ENCODE measurements at regions of chr11 and their contacts with region 1.

Region 1: DNA sequence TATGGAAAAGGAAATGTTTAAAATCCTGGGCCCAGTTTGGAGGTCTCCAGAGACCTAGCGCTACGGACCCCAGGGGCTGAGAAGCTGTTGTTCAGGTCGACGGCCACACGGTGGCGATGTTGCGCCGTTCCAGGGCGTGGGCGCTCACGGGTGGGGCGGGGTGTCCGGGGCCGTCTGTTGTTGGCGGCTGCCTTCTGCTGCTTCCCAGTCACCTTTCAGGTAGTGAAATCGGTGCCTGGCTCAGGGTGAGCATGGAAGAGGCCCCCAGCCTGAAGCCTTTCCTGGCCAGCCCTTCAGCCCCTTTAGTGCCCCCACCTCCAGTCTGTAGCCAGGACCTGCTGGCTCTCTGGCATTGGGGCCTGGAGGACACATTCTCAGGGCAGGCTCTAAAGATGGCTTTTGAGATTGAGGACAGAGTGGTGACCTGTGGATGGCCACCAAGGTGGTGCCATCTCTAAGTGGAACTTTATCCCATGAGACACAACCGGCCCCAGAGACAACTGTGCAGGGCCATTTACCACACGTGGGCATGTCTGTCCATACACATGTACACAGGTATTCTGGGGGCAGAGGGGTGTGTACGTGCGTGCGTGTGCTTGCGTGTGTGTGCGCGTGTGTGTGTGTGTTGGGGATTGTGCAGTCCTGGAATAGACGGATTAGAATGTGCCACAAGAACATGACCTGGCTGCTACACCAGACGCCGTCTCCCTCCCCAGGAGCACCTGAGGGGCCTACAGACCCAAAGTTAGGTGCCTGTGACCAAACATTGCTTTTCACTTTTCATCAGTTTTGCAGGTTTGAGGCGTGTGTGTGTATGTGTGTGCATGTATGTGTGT is 53.8 kb downstream of the ST14 start:
- DNase-seq: peak; percentile 36 to 80 (median 52)
- H3K4me3 ChIP-seq: no peak overlapping the region
- H3K27ac ChIP-seq: no peak overlapping the region
- H3K4me1 ChIP-seq: no peaks in the 10 kb centered on the region
- H3K27me3 ChIP-seq: no peaks in the 10 kb centered on the region
- CTCF ChIP-seq: peak; percentile 63 to 83 (median 64)
- EP300 ChIP-seq: no peak
- POLR2A ChIP-seq: no peak

Region 2: GRCh38 chr11:130413405-130414106 is 200.2 kb after region 1 on chr11:
- intact Hi-C with region 1: loop called in 1 of 4 experiments (anchors 10 kb)
- DNase-seq: no peak
- H3K4me3 ChIP-seq: no peak overlapping the region
- H3K27ac ChIP-seq: no peak overlapping the region
- H3K4me1 ChIP-seq: no peaks in the 10 kb centered on the region
- H3K27me3 ChIP-seq: no peaks in the 10 kb centered on the region
- CTCF ChIP-seq: no peak
- EP300 ChIP-seq: no peak
- POLR2A ChIP-seq: no peak

Region 3: DNA sequence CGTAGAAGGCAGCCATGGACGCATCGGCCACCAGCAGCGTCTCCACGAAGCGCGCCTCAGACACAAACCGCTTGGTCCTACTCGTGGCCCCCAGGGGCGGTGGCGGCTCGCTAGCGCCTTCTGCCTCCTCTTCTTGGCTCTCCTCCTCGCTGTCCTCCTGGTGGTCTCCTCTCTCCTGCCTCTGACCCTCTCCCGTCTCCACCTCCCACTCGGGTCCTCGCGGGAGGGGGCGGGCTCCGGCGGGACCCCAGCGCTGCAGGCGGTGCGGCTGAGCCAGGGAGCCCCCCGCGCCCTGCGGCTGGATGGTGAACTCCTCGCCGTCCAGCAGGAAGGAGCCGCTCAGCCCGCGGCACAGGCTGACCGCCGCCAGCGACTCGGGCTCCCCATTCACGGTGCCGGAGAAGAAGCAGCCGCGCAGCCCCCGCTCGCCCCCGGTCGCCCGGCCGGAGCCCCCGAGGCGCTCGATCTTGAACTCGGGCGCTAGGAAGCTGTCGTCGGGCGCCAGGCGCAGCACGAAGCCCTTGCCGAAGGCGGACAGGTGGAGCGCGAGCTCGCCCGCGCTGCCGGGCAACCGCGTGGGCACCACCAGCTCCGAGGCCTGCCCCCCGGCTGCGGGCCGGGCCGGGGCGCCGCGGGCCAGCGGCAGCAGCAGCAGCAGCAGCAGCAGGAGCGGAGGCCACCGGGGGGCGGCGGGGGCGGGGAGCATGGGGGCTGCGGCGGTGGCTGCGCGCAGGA is 214.4 kb after region 1 on chr11:
- intact Hi-C with region 1: loop called in 2 of 4 experiments (anchors 5 to 10 kb)
- DNase-seq: peak in 2 of 5 donors; percentile 37 to 49
- H3K4me3 ChIP-seq: peak overlapping the region; percentile 38
- H3K27ac ChIP-seq: no peak overlapping the region
- H3K4me1 ChIP-seq: peaks cover 2% of the 10 kb centered on the region
- H3K27me3 ChIP-seq: no peaks in the 10 kb centered on the region
- CTCF ChIP-seq: no peak
- EP300 ChIP-seq: no peak
- POLR2A ChIP-seq: no peak

Region 4: DNA sequence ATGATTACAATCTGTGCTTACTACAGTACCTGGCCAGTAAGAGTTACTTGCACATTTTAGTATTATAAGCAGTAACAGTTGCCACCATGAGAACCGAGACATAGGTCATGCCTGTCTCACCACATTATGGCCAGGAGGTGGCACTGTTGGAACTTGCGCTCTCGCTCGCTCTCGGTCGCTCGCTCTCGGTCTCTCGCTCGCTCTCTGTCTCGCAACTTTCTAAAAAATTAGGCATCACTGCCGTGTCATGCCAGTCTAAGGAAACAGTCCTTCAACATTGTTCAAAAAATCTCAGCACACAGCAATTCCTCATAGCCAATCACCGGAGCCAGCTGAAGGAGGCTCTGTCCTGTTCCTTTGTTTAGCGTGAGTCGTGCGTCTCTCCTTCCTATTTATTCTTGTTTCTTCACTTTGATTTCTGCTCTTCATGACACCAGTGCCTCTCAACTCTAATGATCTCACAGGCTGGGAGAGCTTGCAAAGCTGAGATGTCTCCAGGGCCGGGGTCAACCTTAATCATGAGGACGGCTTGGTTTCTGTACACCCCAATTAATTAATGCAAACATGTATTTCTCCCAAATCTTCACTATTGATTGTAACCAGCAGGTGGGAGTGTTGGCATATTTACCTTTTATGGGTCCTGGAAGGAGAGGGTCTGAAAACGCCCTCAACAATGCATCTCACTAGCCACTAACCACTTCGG is 221.3 kb after region 1 on chr11:
- intact Hi-C with region 1: loop called in 2 of 4 experiments (anchors 5 to 10 kb)
- DNase-seq: peak; percentile 68 to 79 (median 76)
- H3K4me3 ChIP-seq: peak overlapping the region; percentile 38
- H3K27ac ChIP-seq: peak overlapping the region; percentile 18 to 39
- H3K4me1 ChIP-seq: peaks cover 2% of the 10 kb centered on the region
- H3K27me3 ChIP-seq: no peaks in the 10 kb centered on the region
- CTCF ChIP-seq: peak; percentile 74 to 85 (median 75)
- EP300 ChIP-seq: no peak
- POLR2A ChIP-seq: no peak